ENCODE measurements at regions of chr11 and their contacts with region 1.

Region 1: DNA sequence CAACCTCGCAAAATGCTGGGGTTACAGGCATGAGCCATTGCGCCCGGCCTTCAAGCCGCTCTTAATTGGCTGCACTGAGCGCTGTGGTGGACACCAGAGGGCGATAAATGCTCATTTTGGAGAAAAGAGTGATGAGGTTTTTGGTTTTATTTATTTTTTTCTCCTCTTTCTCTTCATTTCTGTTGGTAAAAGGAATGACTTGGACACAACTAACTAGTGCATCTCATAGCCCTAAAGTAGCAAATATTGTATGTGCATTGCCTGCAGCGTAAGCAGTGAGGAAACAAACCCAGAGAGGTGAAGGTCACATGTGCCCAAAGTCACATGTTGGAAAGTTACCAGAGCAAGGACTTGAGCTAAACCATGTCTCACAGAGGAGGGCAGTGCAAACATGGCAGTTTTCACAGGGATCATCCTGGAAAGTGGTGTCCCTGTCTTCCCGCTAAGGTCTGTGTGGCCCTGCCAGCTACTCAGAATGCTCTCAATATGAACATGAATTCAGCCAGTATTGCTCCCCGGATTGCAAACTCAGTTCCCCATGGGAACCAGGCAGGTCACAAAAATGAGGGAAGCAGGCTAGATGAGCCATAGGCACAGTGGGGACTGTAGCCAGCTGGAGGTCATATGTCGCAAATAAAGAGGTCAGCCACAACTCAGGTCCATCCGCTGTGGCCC is 8.6 kb upstream of the CD82 start:
- DNase-seq: peak; percentile 60 to 69 (median 61)
- H3K4me3 ChIP-seq: no peak overlapping the region
- H3K4me3 Mint-ChIP-seq: no peak overlapping the region
- H3K27ac ChIP-seq: no peak overlapping the region
- H3K27ac Mint-ChIP-seq: peak overlapping the region; percentile 54 to 86 (median 70)
- H3K4me1 ChIP-seq: peaks cover 21% of the 10 kb centered on the region
- H3K4me1 Mint-ChIP-seq: peaks cover 16 to 34% (median 27%) of the 10 kb centered on the region in 4 donors
- H3K27me3 ChIP-seq: no peaks in the 10 kb centered on the region
- H3K27me3 Mint-ChIP-seq: no peaks in the 10 kb centered on the region

Region 2: DNA sequence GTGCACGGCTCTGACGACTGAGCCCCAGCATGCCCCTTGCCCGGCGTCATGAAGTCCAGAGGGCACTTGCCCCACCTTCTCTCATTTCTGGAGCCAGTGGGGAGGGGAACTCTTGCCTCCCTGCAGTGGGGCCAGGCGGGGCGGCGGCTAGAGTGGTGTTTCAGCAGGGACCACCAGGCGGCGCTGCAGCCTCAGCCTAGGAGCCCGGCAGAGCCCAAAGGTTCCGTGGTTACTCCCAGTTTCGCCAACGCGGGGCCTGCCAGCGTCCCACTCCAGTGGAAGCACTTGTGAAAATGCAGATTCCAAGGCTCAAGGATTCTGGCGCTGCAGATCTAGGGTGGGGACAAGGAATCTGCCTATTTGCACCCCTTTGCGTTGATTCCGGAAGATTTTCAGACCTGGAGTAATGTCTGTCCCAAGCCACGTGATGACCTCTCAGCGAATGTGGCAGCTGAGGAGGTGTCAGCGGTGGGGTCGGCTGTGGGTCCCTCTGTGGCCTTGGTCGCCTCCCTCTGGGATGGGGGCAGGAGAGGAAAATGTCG is 64.3 kb after region 1 on chr11:
- CTCF ChIA-PET with region 1: interaction called, 699 read pairs
- POLR2A ChIA-PET with region 1: interaction called, 397 read pairs
- intact Hi-C with region 1: loop called (anchors 1 kb)
- DNase-seq: peak; percentile 55 to 64 (median 57)
- H3K4me3 ChIP-seq: no peak overlapping the region
- H3K4me3 Mint-ChIP-seq: peak overlapping the region in 1 of 8 donors; percentile 25
- H3K27ac ChIP-seq: no peak overlapping the region
- H3K27ac Mint-ChIP-seq: peak overlapping the region in 5 of 7 donors; percentile 25 to 52 (median 41)
- H3K4me1 ChIP-seq: peaks cover 28% of the 10 kb centered on the region
- H3K4me1 Mint-ChIP-seq: peaks cover 18 to 62% (median 42%) of the 10 kb centered on the region in 4 donors
- H3K27me3 ChIP-seq: no peaks in the 10 kb centered on the region
- H3K27me3 Mint-ChIP-seq: no peaks in the 10 kb centered on the region

Region 3: DNA sequence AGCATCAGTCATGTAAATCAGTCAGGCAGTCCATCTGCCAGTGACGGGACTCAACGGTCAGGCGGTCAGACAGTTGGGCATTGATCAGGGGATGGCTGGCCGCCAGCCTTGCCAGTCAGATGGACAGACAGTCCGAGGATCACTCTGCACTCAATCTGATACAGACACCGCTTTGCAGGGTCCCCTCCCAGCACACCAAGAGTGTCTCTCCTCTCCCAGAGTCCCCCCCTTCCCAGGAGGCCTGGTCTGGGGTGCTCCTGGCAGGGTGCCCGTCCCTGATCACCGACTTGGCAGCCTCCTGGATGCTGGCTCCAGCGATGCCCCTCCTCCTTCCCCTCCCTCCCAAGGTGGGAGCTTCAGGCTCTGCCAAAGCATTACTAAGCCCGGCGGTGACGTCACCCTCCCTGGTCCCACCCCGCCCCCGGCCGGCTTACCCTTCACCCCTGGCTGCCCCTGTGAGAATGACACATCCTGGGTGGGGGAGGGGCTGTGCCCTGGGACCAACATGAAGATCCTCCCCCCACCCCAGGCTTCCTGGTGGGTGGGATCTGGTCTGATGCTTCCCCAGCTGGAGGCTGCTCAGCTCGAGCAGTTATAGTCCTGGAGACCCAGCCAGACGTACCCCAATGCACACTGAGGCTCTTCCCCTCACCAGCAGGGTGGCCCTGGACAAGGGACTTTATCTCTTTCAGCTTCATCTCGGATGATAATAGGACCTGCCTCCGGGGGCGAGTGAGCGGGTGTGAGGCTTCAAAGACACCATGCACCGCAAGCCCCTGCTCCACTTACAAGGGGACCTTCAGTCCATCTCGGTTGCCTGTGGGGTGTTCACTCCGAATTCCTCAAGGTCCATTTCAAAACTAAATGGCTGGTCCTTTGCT is 77.8 kb after region 1 on chr11:
- CTCF ChIA-PET with region 1: interaction called, 42 read pairs
- POLR2A ChIA-PET with region 1: no interaction called
- intact Hi-C with region 1: no loop called
- DNase-seq: no peak
- H3K4me3 ChIP-seq: no peak overlapping the region
- H3K4me3 Mint-ChIP-seq: no peak overlapping the region
- H3K27ac ChIP-seq: no peak overlapping the region
- H3K27ac Mint-ChIP-seq: no peak overlapping the region
- H3K4me1 ChIP-seq: peaks cover 3% of the 10 kb centered on the region
- H3K4me1 Mint-ChIP-seq: peaks cover 0 to 13% (median 7%) of the 10 kb centered on the region in 4 donors
- H3K27me3 ChIP-seq: no peaks in the 10 kb centered on the region
- H3K27me3 Mint-ChIP-seq: peaks cover 8 to 14% of the 10 kb centered on the region in 2 donors

Region 4: DNA sequence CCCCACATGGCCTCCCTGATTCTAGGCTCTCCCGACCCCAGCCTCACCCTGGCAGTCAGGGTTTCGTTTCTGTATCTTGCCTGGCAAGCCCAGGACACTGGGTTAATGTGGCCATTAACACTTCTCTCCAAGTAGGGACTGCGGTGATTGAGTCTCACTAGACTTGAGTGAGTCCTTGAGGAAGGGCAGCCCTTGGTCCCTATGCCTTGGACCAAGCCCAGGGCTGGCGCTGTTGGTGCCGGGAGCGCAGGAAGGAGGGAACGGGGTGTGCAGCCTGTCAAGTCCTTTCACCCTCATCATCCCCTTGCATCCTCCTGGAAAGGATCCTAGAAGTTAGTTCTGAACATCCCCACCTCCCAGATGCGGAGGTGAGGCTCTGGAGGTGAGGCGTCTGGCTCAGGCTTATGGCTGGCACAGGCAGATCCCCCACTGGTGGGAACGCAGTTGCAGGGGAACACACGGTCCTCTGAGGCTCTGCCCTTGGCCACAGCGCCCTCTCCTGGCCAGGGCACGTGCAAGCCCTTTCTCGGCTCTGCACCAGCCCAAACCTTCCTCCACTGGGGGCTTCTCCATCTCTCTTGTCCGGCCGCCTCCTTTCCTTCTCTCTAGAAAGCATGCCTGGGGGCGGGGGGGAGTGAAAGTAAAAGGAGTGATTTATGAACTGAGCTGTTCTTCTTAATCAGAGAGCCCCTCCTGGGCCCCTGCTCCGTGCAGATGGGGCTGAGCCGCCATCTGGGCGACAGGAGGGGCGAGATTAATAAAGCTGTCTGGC is 337.2 kb after region 1 on chr11:
- CTCF ChIA-PET with region 1: interaction called, 13 read pairs
- POLR2A ChIA-PET with region 1: no interaction called
- intact Hi-C with region 1: loop called (anchors 2 kb)
- DNase-seq: peak; percentile 50 to 56 (median 54)
- H3K4me3 ChIP-seq: no peak overlapping the region
- H3K4me3 Mint-ChIP-seq: no peak overlapping the region
- H3K27ac ChIP-seq: no peak overlapping the region
- H3K27ac Mint-ChIP-seq: peak overlapping the region in 1 of 7 donors; percentile 17
- H3K4me1 ChIP-seq: no peaks in the 10 kb centered on the region
- H3K4me1 Mint-ChIP-seq: peaks cover 2 to 18% (median 12%) of the 10 kb centered on the region in 4 donors
- H3K27me3 ChIP-seq: no peaks in the 10 kb centered on the region
- H3K27me3 Mint-ChIP-seq: no peaks in the 10 kb centered on the region

Measured in CD4-positive, alpha-beta memory T cell (primary cell).